ENCODE measurements at regions of chr17 and their contacts with region 1.

Region 1: GRCh38 chr17:76481071-76481655 is 13.8 kb downstream of the AANAT start:
- DNase-seq: peak; percentile 61
- ATAC-seq: peak; percentile 64
- H3K4me3 Mint-ChIP-seq: peak overlapping the region; percentile 81
- H3K27ac Mint-ChIP-seq: peak overlapping the region; percentile 92
- H3K4me1 Mint-ChIP-seq: peaks cover 79% of the 10 kb centered on the region
- H3K27me3 Mint-ChIP-seq: no peaks in the 10 kb centered on the region
- CTCF ChIP-seq: no peak

Region 2: GRCh38 chr17:76397687-76398487 is 83.3 kb before region 1 on chr17:
- CTCF ChIA-PET with region 1: no interaction called
- POLR2A ChIA-PET with region 1: no interaction called
- intact Hi-C with region 1: no loop called
- DNase-seq: peak; percentile 79
- ATAC-seq: peak; percentile 93
- H3K4me3 Mint-ChIP-seq: no peak overlapping the region
- H3K27ac Mint-ChIP-seq: no peak overlapping the region
- H3K4me1 Mint-ChIP-seq: peaks cover 3% of the 10 kb centered on the region
- H3K27me3 Mint-ChIP-seq: no peaks in the 10 kb centered on the region
- CTCF ChIP-seq: peak; percentile 98

Region 3: GRCh38 chr17:76501018-76501826 is 20.1 kb after region 1 on chr17 and contains the start of gene RHBDF2:
- CTCF ChIA-PET with region 1: interaction called, 4 read pairs
- POLR2A ChIA-PET with region 1: interaction called, 769 read pairs
- intact Hi-C with region 1: loop called (anchors 1 kb)
- DNase-seq: peak; percentile 100
- ATAC-seq: peak; percentile 87
- H3K4me3 Mint-ChIP-seq: peak within 1 kb of the TSS; percentile 99
- H3K27ac Mint-ChIP-seq: peak within 1 kb of the TSS; percentile 95
- H3K4me1 Mint-ChIP-seq: peaks cover 64% of the 10 kb centered on the region
- H3K27me3 Mint-ChIP-seq: no peaks in the 10 kb centered on the region
- CTCF ChIP-seq: no peak
- total RNA-seq, gene RHBDF2: 150 and 189 TPM in 2 replicates

Measured in activated B cell treated with CpG ODN at 0.5 μM for 24 hours (primary cell).